Activated B cell treated with CpG ODN at 0.5 μM for 24 hours (primary cell): ENCODE measurements at regions of chr20 and their contacts with region 1.

Region 1: DNA sequence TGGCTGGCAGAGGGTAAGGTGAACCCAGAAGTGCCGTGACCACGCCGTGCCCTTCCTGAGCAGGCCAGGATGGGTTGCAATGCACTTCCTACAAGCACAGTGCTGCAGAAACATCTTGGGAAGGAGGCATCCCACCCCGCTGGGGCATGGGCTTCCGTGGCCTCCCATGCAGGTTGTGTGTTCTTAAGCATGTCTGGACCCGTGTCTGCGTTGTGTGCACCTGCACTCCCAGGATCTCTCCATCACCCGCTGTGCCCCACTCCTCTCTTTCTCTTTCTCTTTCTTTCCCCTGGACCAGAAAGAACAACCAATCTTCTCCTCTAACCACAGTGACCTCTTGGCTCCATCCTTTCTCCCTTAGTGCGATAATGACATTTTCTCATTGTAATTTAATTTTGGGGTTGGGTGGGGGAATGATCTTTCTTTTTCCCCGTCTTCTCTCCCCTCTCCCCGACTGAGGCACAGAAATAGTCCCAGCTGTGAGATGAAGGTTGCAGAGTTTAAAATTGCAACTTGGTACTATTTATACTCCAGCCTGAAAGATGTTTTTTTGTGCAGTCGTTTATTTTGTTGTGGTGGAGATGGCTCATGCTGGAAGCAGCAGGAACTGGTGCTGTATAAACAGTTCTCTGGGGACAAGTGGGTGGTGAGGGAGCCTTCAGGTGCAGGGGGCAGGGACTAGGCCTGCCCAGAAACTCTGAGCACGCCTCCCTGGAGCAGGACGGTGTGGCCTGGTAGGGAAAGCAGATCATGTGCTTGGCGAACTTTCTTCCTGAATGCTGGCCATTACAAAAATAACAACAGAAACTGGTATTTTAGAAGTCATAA is 20.5 kb downstream of the BCAS4 start:
- DNase-seq: no peak
- ATAC-seq: peak; percentile 56
- H3K4me3 Mint-ChIP-seq: peak overlapping the region; percentile 81
- H3K27ac Mint-ChIP-seq: peak overlapping the region; percentile 98
- H3K4me1 Mint-ChIP-seq: peaks cover 96% of the 10 kb centered on the region
- H3K27me3 Mint-ChIP-seq: no peaks in the 10 kb centered on the region
- CTCF ChIP-seq: no peak

Region 2: DNA sequence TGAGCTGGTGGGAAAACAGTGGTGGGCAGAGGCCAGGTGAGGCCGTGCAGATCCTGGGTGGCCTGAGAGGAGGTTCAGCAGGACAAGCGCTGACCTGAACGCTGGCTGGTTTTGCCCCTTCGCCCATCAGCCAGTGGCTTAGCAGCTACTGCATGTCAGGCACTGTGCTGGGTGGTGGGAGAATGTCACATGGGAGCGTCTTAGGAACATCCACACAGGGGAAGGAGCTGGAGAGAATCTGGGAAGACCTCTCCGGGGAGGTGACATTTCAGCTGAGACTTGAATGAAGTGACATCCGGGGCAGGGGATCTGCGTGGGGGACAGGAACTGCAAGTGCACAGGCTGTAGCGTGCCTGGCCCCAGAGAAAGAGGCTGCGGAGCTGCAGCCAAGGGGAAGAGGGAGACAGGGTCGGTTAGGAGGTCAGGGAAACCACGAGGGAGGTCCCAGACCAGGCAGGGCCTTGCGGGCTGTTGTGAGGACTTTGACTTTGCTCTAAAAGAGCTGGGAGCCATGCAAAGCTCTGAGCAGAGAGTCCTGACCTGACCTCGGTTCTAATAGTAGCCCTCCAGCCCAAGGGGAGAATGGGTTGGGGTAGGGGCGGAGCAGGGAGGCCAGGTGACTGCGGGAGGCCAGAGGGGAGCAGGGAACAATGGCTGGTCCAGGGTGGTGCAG is 462.0 kb before region 1 on chr20:
- CTCF ChIA-PET with region 1: no interaction called
- POLR2A ChIA-PET with region 1: no interaction called
- intact Hi-C with region 1: no loop called
- DNase-seq: no peak
- ATAC-seq: no peak
- H3K4me3 Mint-ChIP-seq: no peak overlapping the region
- H3K27ac Mint-ChIP-seq: no peak overlapping the region
- H3K4me1 Mint-ChIP-seq: peaks cover 12% of the 10 kb centered on the region
- H3K27me3 Mint-ChIP-seq: peaks cover 16% of the 10 kb centered on the region
- CTCF ChIP-seq: no peak

Region 3: GRCh38 chr20:50799890-50800655 is 15.3 kb before region 1 on chr20:
- CTCF ChIA-PET with region 1: interaction called, 145 read pairs
- POLR2A ChIA-PET with region 1: interaction called, 233 read pairs
- intact Hi-C with region 1: loop called (anchors 1 kb)
- DNase-seq: no peak
- ATAC-seq: peak; percentile 47
- H3K4me3 Mint-ChIP-seq: peak overlapping the region; percentile 71
- H3K27ac Mint-ChIP-seq: peak overlapping the region; percentile 96
- H3K4me1 Mint-ChIP-seq: peaks cover 71% of the 10 kb centered on the region
- H3K27me3 Mint-ChIP-seq: no peaks in the 10 kb centered on the region
- CTCF ChIP-seq: no peak

Region 4: GRCh38 chr20:50844430-50845100 is 29.2 kb after region 1 on chr20:
- CTCF ChIA-PET with region 1: interaction called, 5 read pairs
- POLR2A ChIA-PET with region 1: interaction called, 11 read pairs
- intact Hi-C with region 1: loop called (anchors 1 kb)
- DNase-seq: peak; percentile 28
- ATAC-seq: peak; percentile 91
- H3K4me3 Mint-ChIP-seq: no peak overlapping the region
- H3K27ac Mint-ChIP-seq: peak overlapping the region; percentile 83
- H3K4me1 Mint-ChIP-seq: peaks cover 47% of the 10 kb centered on the region
- H3K27me3 Mint-ChIP-seq: no peaks in the 10 kb centered on the region
- CTCF ChIP-seq: no peak

Region 5: DNA sequence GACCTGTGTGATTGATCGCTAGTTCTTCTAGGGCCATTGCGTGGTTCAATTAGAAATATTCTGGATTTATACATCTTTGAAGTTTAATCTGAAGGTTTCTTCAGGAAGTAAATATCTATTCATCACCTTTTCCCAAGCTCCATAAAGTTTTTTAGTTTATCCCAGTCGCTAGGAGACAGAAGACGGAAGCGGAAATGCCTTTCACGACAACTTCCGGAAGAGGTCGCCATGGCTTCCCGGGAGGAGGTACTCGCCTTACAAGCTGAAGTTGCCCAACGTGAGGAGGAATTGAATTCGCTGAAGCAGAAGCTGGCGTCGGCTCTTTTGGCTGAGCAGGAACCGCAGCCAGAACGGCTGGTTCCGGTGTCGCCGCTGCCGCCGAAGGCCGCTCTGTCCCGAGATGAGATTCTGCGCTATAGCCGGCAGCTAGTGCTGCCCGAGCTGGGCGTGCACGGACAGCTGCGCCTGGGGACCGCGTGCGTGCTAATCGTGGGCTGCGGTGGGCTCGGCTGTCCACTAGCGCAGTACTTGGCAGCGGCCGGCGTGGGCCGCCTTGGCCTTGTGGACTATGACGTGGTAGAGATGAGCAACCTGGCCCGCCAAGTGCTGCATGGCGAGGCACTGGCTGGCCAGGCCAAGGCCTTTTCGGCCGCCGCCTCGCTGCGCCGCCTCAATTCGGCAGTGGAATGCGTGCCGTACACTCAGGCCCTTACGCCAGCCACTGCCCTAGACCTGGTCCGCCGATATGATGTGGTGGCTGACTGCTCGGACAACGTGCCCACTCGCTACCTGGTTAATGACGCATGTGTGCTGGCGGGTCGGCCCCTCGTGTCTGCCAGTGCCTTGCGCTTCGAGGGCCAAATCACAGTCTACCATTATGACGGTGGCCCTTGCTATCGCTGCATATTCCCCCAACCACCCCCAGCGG is 143.5 kb after region 1 on chr20 and contains the start of gene MOCS3:
- CTCF ChIA-PET with region 1: no interaction called
- POLR2A ChIA-PET with region 1: interaction called, 8 read pairs
- intact Hi-C with region 1: loop called (anchors 1 kb)
- DNase-seq: peak; percentile 61
- ATAC-seq: peak; percentile 81
- H3K4me3 Mint-ChIP-seq: peak within 1 kb of the TSS; percentile 96
- H3K27ac Mint-ChIP-seq: peak within 1 kb of the TSS; percentile 99
- H3K4me1 Mint-ChIP-seq: peaks cover 49% of the 10 kb centered on the region
- H3K27me3 Mint-ChIP-seq: no peaks in the 10 kb centered on the region
- CTCF ChIP-seq: no peak
- total RNA-seq, gene MOCS3: 7.5 and 8.1 TPM in 2 replicates